Calu3 (cell line): ENCODE measurements at regions of chr17 and their contacts with region 1.

Region 1: GRCh38 chr17:4881761-4882555 is 17.4 kb upstream of the C17orf107 start:
- DNase-seq: peak; percentile 78
- H3K4me3 Mint-ChIP-seq: no peak overlapping the region
- H3K27ac Mint-ChIP-seq: no peak overlapping the region
- H3K4me1 Mint-ChIP-seq: no peaks in the 10 kb centered on the region
- H3K27me3 Mint-ChIP-seq: no peaks in the 10 kb centered on the region
- CTCF ChIP-seq: peak; percentile 58

Region 2: GRCh38 chr17:4739122-4740024 is 142.6 kb before region 1 on chr17 and contains the starts of genes CXCL16 and ZMYND15:
- CTCF ChIA-PET with region 1: no interaction called
- intact Hi-C with region 1: loop called (anchors 10 kb)
- DNase-seq: peak; percentile 65
- H3K4me3 Mint-ChIP-seq: peak within 1 kb of the TSS; percentile 77
- H3K27ac Mint-ChIP-seq: peak within 1 kb of the TSS; percentile 82
- H3K4me1 Mint-ChIP-seq: peaks cover 8% of the 10 kb centered on the region
- H3K27me3 Mint-ChIP-seq: no peaks in the 10 kb centered on the region
- CTCF ChIP-seq: no peak
- total RNA-seq, gene CXCL16: 73.1 and 77.6 TPM in 2 replicates
- total RNA-seq, gene ZMYND15: 2.2 and 2.5 TPM in 2 replicates

Region 3: GRCh38 chr17:4913994-4914393 is 32.0 kb after region 1 on chr17:
- CTCF ChIA-PET with region 1: no interaction called
- intact Hi-C with region 1: no loop called
- DNase-seq: no peak
- H3K4me3 Mint-ChIP-seq: no peak overlapping the region
- H3K27ac Mint-ChIP-seq: no peak overlapping the region
- H3K4me1 Mint-ChIP-seq: no peaks in the 10 kb centered on the region
- H3K27me3 Mint-ChIP-seq: no peaks in the 10 kb centered on the region
- CTCF ChIP-seq: no peak

Region 4: DNA sequence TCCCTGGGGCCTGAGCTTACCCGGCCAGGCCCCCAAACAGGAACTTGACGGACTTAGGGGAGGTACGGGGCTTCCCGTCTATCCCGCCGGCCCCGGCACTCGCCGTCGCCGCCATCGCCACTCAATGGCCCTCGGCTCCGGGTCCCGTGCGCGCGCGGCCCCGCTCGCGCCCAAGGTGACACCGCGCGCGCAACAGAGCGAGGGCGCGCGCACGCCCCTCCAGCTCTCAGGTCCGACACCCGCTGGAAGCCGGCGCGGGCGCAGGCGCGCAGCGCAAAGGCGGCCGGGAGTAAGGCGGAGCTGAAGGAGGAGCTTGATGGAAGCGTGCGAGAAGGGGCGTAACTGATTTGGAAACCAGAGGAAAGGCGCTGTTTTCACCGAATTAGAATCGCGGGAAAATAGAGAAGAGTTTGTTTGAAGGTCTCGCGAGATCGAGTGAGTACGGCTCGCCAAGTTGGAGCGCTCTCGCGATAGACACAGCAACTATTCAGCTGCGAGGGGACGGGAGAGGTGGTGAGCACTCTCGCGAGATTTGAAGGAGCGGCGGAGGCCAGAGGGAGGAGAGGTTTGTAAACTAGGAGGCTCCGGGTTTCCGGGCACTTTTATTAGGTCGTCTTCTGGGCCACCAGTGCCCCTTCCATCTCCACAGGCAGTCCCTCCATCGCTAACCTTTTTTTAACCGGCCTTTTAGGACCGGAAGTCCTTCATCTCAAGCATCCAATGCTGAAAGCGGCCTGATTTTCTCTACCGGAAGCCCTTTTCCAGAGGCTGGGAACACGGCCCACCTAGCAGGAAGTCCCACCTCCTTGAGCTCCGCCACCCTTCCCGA is 58.1 kb after region 1 on chr17 and contains the starts of genes RNF167 and SLC25A11:
- CTCF ChIA-PET with region 1: no interaction called
- intact Hi-C with region 1: no loop called
- DNase-seq: peak; percentile 91
- H3K4me3 Mint-ChIP-seq: peak within 1 kb of the TSS; percentile 91
- H3K27ac Mint-ChIP-seq: peak within 1 kb of the TSS; percentile 98
- H3K4me1 Mint-ChIP-seq: peaks cover 22% of the 10 kb centered on the region
- H3K27me3 Mint-ChIP-seq: no peaks in the 10 kb centered on the region
- CTCF ChIP-seq: no peak
- total RNA-seq, gene RNF167: 65.2 and 77.0 TPM in 2 replicates
- total RNA-seq, gene SLC25A11: 37.7 and 38.4 TPM in 2 replicates